ENCODE measurements at regions of chr13 and their contacts with region 1.

Region 1: GRCh38 chr13:44969551-44970484 is 19.5 kb downstream of the NUFIP1 start:
- DNase-seq: peak; percentile 66
- H3K4me3 ChIP-seq: no peak overlapping the region
- H3K27ac ChIP-seq: peak overlapping the region; percentile 1
- H3K4me1 ChIP-seq: peaks cover 44% of the 10 kb centered on the region
- H3K27me3 ChIP-seq: no peaks in the 10 kb centered on the region
- CTCF ChIP-seq: peak; percentile 40 to 56
- POLR2A ChIP-seq: no peak

Region 2: DNA sequence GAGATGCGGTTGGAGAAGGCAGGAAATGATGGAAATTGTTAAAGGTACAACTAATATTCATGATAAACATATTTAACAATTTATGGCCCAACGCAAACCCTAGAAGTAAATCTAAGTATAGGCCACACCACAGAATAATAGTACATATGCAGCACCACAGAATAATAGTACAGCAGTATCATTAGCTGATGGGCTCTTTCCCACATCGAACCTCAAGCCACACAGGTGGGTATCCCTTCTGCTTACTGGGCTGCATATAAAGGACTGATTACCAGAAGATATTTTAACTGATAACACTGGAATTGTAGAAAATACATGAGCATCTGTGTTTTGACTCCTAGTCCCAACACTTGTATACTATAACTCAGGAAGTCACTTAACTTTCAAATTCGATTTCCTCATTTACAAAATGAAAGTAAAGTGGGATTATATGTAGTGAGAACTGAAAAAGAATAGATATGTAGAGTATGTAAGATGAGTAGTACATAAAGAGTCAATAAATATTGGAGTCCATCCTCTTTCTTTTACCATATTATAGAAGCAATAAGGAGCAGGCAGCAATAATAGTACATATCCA is 485.2 kb before region 1 on chr13:
- CTCF ChIA-PET with region 1: interaction called, 51 read pairs
- POLR2A ChIA-PET with region 1: no interaction called
- dilution Hi-C with region 1: no loop called
- intact Hi-C with region 1: loop called (anchors 1 kb)
- DNase-seq: peak; percentile 9
- H3K4me3 ChIP-seq: no peak overlapping the region
- H3K27ac ChIP-seq: no peak overlapping the region
- H3K4me1 ChIP-seq: peaks cover 10% of the 10 kb centered on the region
- H3K27me3 ChIP-seq: no peaks in the 10 kb centered on the region
- CTCF ChIP-seq: no peak
- POLR2A ChIP-seq: no peak

Region 3: GRCh38 chr13:44591316-44591715 is 378.5 kb before region 1 on chr13:
- CTCF ChIA-PET with region 1: no interaction called
- POLR2A ChIA-PET with region 1: no interaction called
- dilution Hi-C with region 1: no loop called
- intact Hi-C with region 1: no loop called
- DNase-seq: no peak
- H3K4me3 ChIP-seq: no peak overlapping the region
- H3K27ac ChIP-seq: no peak overlapping the region
- H3K4me1 ChIP-seq: no peaks in the 10 kb centered on the region
- H3K27me3 ChIP-seq: no peaks in the 10 kb centered on the region
- CTCF ChIP-seq: no peak
- POLR2A ChIP-seq: no peak

Region 4: DNA sequence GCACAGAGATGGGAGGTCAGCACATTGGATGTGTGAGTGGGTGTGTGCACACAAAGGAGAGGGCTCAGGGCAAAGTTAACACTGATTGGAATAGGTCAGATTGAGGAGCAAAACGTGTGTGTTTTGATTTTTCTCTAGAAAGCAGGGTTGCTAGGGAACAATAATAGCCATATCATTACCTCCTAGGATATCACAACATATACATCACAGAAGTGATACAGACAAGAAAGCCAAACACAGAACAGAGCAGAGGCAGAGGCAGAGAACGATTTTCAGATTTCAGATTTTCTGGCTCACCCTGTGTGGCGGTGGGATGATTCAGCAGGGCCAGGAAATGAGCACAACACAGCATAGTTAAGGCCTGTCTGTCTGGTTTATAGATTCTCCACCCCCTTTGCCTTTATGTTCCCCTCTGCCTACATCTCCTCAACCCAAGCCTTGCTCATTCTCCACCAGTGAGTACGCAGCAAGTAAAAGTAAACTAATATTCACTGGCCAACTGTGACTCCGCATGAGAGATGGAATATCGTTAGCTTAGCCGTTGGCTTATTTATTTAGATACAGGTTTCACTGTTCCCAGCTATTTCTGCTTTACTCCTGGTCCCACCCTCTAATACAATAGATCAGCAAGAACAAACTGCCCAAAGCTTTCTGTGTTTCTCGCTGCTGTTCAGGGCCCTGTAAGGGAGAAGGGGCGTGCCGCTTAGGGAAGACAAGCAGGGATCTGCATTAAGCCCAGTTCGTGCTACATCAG is 211.0 kb before region 1 on chr13:
- CTCF ChIA-PET with region 1: no interaction called
- POLR2A ChIA-PET with region 1: no interaction called
- dilution Hi-C with region 1: no loop called
- intact Hi-C with region 1: loop called (anchors 5 kb)
- DNase-seq: peak; percentile 85
- H3K4me3 ChIP-seq: no peak overlapping the region
- H3K27ac ChIP-seq: peak overlapping the region; percentile 85
- H3K4me1 ChIP-seq: peaks cover 53% of the 10 kb centered on the region
- H3K27me3 ChIP-seq: no peaks in the 10 kb centered on the region
- CTCF ChIP-seq: no peak
- POLR2A ChIP-seq: no peak

Region 5: DNA sequence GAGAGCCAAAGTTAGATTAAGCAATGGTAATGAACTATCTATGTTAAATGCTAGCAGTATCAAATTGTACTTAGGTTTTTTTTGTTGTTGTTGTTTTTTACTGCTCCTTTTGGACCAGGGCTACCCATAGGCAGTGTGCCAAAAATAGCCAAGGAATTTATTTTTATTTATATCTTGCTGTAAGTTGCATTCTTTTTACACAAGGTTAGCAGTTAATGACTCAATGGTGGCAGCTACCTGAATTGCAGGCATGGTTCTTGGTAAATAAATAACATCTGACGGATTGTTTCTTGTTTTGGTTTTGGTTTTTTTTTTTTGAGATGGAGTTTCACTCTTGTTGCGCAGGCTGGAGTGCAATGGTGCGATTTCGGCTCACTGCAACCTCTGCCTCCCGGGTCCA is 198.9 kb before region 1 on chr13:
- CTCF ChIA-PET with region 1: no interaction called
- POLR2A ChIA-PET with region 1: no interaction called
- dilution Hi-C with region 1: no loop called
- intact Hi-C with region 1: no loop called
- DNase-seq: no peak
- H3K4me3 ChIP-seq: no peak overlapping the region
- H3K27ac ChIP-seq: no peak overlapping the region
- H3K4me1 ChIP-seq: peaks cover 3% of the 10 kb centered on the region
- H3K27me3 ChIP-seq: no peaks in the 10 kb centered on the region
- CTCF ChIP-seq: no peak
- POLR2A ChIP-seq: no peak

Region 6: GRCh38 chr13:44917589-44918325 is 52.1 kb before region 1 on chr13:
- CTCF ChIA-PET with region 1: interaction called, 34 read pairs
- POLR2A ChIA-PET with region 1: no interaction called
- dilution Hi-C with region 1: no loop called
- intact Hi-C with region 1: loop called (anchors 1 kb)
- DNase-seq: peak; percentile 98
- H3K4me3 ChIP-seq: peak overlapping the region; percentile 4 to 66 (median 38)
- H3K27ac ChIP-seq: peak overlapping the region; percentile 95
- H3K4me1 ChIP-seq: peaks cover 29% of the 10 kb centered on the region
- H3K27me3 ChIP-seq: no peaks in the 10 kb centered on the region
- CTCF ChIP-seq: peak; percentile 38 to 42
- POLR2A ChIP-seq: no peak

Region 7: GRCh38 chr13:44988973-44989817 is 19.4 kb after region 1 on chr13 and contains the starts of genes GPALPP1 and NUFIP1:
- CTCF ChIA-PET with region 1: interaction called, 10 read pairs
- POLR2A ChIA-PET with region 1: no interaction called
- dilution Hi-C with region 1: no loop called
- intact Hi-C with region 1: loop called (anchors 1 kb)
- DNase-seq: peak; percentile 94
- H3K4me3 ChIP-seq: peak within 1 kb of the TSS; percentile 78 to 98 (median 84)
- H3K27ac ChIP-seq: peak within 1 kb of the TSS; percentile 83
- H3K4me1 ChIP-seq: peaks cover 21% of the 10 kb centered on the region
- H3K27me3 ChIP-seq: no peaks in the 10 kb centered on the region
- CTCF ChIP-seq: peak in 1 of 2 donors; percentile 7
- POLR2A ChIP-seq: peak; percentile 75
- total RNA-seq, gene GPALPP1: 26.1 and 28.2 TPM in 2 replicates
- total RNA-seq, gene NUFIP1: 6.9 and 7.4 TPM in 2 replicates

Region 8: DNA sequence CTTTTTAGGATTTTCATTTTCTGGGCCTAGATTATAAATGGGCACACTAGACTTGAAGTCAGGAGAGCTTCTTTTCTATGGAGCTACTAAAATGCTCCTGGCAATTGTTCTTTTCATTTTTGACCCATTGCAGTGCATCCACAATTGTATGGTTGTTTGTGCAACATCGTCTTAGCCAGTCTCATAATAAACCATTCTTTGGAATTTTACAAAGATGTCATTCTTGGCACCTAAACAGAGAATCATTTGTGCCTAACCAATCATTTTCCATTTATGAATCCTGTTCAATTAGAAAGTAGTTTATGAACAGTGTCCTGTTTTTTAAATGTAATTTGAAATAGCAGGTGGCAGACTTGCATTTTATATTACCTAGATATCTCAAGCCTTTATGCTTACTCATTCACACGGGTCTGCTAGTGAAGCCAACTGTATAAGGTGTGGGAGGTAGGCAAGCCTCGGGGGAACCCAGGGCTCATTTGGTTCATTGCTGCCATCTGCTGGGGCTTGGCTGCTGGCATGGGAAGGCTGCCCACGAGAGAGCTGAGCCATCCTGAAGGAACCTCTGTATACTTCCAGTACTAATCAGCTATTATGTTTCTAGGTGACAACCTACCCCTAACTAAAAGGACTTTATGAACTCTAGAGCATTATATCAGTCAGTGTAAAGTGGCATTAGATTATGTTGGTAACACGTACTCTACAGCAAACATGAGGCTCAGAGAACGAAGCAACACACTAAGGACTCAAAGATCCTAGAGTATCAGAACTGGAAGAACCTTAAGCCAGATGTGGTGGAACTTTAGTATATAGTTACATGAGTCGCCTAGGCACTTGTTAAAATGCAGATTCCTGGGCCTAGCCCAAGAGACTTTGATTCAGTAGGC is 311.2 kb after region 1 on chr13:
- CTCF ChIA-PET with region 1: interaction called, 14 read pairs
- POLR2A ChIA-PET with region 1: no interaction called
- dilution Hi-C with region 1: no loop called
- intact Hi-C with region 1: loop called (anchors 1 kb)
- DNase-seq: peak; percentile 79
- H3K4me3 ChIP-seq: no peak overlapping the region
- H3K27ac ChIP-seq: no peak overlapping the region
- H3K4me1 ChIP-seq: peaks cover 8% of the 10 kb centered on the region
- H3K27me3 ChIP-seq: no peaks in the 10 kb centered on the region
- CTCF ChIP-seq: peak; percentile 80 to 88
- POLR2A ChIP-seq: no peak